BJ (cell line): ENCODE measurements at regions of chr12 and their contacts with region 1.

Region 1: DNA sequence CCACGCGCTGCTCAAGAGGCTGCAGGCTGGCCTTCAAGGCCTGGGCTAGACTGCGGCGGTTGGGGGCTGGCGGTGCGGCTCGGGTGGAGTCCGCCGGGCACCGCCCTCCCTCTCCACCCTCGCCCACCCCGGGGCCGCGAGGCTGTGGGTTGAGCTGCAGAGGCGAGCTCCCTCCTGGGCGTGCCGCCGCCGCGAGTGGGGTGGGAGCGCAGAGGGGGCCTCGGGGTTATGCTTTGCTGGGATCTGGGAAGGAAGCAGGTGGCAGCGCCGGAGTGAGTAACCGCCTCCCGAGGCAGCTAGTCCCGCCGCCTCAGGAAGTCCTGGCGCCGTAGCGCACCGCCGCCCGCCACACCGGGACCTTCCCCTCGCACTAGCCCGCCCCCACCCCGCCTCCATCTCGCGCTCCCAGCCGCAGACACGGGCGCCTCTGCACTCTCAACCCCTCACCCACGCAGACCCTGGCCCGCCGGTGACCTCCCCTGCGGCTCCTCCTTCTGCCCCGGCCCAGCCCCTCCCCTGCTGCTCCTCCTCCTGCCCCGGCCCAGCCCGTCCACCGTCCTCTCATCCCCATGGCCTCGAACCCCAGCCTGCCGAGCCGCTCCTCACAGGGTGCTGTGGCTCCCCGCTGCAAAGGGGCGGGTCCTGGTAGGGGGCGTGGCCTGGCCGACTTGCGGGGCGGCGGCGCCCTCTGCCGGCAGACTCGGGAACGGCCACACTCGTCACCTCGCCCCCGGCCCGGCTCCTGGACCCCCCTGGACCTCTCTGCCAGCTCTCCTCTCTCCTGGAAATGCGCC is 16.6 kb downstream of the TAMALIN start:
- DNase-seq: no peak
- H3K4me3 ChIP-seq: peak overlapping the region; percentile 61
- H3K27me3 ChIP-seq: no peaks in the 10 kb centered on the region; the same call in 1 of the 2 replicates
- CTCF ChIP-seq: peak; percentile 91

Region 2: DNA sequence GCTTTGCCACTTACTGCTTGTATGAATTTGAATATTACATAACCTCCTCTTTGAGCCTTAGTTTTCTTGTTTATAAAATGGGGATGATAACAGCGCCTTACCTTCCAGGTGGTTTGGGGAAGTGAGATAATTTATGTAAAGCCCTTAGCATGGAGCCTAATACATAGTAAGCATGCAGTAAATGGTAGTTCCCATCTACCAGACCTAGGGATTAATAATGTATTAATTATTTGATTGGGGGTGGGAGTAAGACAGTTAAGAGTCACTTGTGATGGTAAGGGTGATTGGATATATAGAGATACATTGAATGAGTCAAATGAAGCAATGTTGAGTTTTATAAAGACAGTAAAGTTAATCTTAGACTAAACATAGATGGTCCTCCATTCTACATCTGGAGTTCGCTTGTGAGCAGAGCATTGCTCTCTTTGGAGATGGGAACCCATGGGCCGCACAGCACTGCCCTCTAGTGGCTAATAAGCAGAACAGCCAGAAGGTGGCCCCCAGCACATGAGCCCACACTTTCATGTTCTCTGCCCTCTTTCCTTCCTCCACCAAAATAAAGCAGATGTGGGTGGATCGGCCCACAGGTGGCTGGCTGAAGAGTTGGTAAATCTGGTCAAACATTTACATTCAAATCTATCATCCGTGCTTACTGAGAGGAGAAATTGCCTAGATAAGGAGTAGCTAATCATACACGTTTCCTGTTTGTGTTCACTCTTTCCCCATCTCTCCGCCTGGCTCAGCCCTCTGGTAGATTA is 43.1 kb before region 1 on chr12:
- CTCF ChIA-PET with region 1: interaction called, 11 read pairs
- POLR2A ChIA-PET with region 1: no interaction called
- DNase-seq: no peak
- H3K4me3 ChIP-seq: no peak overlapping the region
- H3K27me3 ChIP-seq: no peaks in the 10 kb centered on the region
- CTCF ChIP-seq: peak; percentile 96

Region 3: DNA sequence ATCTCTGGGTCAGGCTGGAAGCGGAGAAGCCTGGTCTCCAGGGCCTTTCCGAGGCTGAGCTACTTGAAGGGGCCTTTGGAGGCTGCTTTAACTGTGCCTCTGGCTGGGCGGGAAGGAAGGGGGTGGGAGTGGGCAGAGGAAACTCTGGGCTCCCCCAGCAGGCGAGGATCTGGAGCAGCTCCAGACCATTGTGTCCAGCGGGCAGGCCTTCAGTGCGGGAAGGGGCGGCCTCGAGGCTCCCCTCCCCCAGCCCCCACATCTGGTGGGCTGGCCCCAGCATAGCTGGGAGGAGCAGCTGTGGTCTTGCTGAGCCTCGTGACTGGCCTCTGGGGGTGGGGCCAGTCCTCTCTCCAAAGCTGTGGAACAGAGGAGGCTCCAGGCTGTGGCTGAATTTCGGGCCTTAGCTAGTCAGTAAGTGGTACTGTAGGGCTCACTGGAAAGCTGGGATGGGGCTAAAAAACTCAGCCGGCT is 13.2 kb before region 1 on chr12:
- CTCF ChIA-PET with region 1: interaction called, 674 read pairs
- POLR2A ChIA-PET with region 1: interaction called, 10 read pairs
- DNase-seq: no peak
- H3K4me3 ChIP-seq: no peak overlapping the region
- H3K27me3 ChIP-seq: peaks cover 6% of the 10 kb centered on the region; the same call in 1 of the 2 replicates
- CTCF ChIP-seq: no peak

Region 4: GRCh38 chr12:52056801-52057637 is 33.6 kb after region 1 on chr12:
- CTCF ChIA-PET with region 1: interaction called, 59 read pairs
- POLR2A ChIA-PET with region 1: no interaction called
- DNase-seq: no peak
- H3K4me3 ChIP-seq: no peak overlapping the region
- H3K27me3 ChIP-seq: no peaks in the 10 kb centered on the region
- CTCF ChIP-seq: no peak

Region 5: DNA sequence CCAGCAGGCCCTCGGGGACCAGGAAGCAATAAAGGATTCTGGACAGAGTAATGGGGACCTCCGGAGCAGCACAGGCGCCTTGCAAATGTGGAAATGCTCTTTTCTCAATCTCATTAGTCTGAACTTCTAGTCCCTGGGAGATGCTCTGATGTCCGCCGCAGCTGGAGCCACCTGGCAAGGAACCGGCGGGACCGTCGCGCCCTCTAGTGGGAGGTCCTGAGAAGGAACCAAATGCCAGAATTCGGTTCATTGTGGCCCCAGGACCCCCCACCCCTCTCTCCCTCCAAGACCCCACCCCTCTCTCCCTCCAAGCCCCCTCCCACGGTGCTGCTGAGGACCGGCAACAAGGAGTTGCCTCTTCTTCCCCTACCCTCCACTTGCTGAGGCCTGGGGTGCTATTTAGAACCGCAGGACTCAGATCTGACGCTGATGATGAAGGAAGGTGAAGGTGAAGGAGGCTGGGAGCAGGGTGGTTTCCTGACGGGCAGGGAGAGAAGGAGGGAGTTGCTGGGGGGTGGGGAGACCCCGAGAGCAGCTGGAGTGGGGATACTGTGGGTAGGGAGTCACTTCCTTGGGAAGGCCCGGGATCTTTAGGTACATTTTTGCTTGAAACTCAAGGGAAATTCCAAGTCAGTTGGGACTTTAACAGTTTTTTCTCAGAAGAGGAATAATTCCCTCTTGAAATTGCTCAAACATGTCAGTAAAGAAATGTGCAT is 98.6 kb after region 1 on chr12:
- CTCF ChIA-PET with region 1: interaction called, 192 read pairs
- POLR2A ChIA-PET with region 1: no interaction called
- DNase-seq: no peak
- H3K4me3 ChIP-seq: no peak overlapping the region
- H3K27me3 ChIP-seq: peaks cover 2% of the 10 kb centered on the region
- CTCF ChIP-seq: peak; percentile 83

Region 6: GRCh38 chr12:52181746-52182145 is 158.4 kb after region 1 on chr12:
- CTCF ChIA-PET with region 1: no interaction called
- POLR2A ChIA-PET with region 1: no interaction called
- DNase-seq: no peak
- H3K4me3 ChIP-seq: no peak overlapping the region
- H3K27me3 ChIP-seq: no peaks in the 10 kb centered on the region
- CTCF ChIP-seq: no peak